ENCODE measurements at regions of chr19 and their contacts with region 1.

Region 1: GRCh38 chr19:2064788-2065524 is 13.9 kb upstream of the MKNK2 start:
- DNase-seq: peak; percentile 49 to 94 (median 63)

Region 2: GRCh38 chr19:1929021-1929742 is 135.8 kb before region 1 on chr19:
- intact Hi-C with region 1: loop called (anchors 1 kb)
- DNase-seq: peak; percentile 50 to 97 (median 78)

Region 3: DNA sequence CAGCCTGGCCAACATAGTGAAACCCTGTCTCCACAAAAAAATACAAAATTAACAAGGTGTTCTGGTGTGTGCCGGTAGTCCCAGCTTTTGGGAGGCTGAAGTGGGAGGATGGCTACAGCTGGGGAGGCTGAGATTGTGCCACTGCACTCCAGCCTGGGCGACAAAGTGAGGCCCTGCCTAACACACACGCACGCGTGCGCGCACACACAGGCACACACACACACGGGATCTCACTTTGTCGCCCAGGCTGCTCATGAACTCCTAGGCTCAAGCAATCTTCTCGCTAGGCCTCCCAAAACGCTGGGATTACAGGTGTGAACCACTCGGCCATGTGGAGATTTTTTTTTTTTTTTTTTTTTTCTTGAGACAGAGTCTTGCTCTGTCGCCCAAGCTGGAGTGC is 46.2 kb before region 1 on chr19:
- intact Hi-C with region 1: loop called (anchors 1 kb)
- DNase-seq: no peak

Measured in posterior cingulate gyrus (tissue), 11 donors.